Right cardiac atrium (tissue), 5 donors: ENCODE measurements at regions of chr15 and their contacts with region 1.

Region 1: GRCh38 chr15:70806992-70807712 is 43.8 kb upstream of the UACA start:
- DNase-seq: peak; percentile 55 to 87 (median 80)
- ATAC-seq: peak; percentile 54 to 59
- H3K4me3 ChIP-seq: no peak overlapping the region
- H3K27ac ChIP-seq: no peak overlapping the region
- H3K4me1 ChIP-seq: peaks cover 5% of the 10 kb centered on the region
- H3K27me3 ChIP-seq: no peaks in the 10 kb centered on the region

Region 2: DNA sequence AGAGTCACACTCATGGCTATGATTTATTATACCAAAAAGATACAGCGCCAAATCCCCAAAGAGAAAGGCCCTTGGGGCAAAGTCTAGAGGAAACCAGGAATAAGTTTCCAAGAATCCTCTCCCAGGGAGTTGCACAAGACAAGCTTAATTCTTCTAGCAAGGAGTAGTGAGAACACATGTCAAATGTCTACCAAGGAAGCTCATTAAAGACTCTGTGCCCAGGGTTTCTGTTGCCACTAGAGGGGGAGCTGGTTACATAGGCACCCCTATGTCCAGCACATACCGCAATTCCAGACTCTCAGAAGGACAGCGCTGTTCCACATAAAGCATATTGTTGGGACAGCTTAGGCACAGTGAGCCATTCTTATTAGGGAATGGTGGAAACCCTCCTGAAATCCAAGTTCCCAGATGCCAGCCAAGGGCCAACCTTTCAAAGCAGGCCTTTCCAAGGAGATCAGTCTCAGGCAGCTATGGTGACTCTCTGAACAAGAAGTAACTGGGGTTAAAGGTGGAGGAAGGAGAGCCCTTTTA is 238.0 kb before region 1 on chr15:
- intact Hi-C with region 1: loop called in 1 of 4 experiments (anchors 5 kb)
- DNase-seq: no peak
- ATAC-seq: peak; percentile 83 to 84
- H3K4me3 ChIP-seq: no peak overlapping the region
- H3K27ac ChIP-seq: no peak overlapping the region
- H3K4me1 ChIP-seq: no peaks in the 10 kb centered on the region
- H3K27me3 ChIP-seq: no peaks in the 10 kb centered on the region

Region 3: DNA sequence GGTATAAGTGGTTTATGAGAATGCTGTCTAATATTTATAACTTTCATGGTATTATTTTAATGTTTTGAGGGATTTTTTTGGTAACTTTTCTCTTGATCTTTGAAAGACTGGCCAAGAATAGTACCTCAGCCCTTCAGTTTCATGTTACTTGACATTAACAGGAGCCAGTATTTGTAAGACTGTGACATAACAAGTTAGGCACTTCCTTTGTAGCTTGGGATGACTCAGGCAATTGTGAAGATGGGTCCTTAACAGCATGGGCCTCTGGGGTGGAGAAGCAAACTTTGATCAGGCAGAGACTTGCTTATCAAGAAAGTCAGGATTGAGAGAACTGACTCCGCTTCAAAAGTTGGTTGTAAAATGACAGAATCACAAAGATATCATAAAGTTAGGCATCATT is 95.0 kb after region 1 on chr15:
- intact Hi-C with region 1: no loop called
- DNase-seq: no peak
- ATAC-seq: peak in 1 of 2 donors; percentile 25
- H3K4me3 ChIP-seq: no peak overlapping the region
- H3K27ac ChIP-seq: no peak overlapping the region
- H3K4me1 ChIP-seq: no peaks in the 10 kb centered on the region
- H3K27me3 ChIP-seq: no peaks in the 10 kb centered on the region